Ovary (tissue), 10 donors: ENCODE measurements at regions of chr17 and their contacts with region 1.

Region 1: DNA sequence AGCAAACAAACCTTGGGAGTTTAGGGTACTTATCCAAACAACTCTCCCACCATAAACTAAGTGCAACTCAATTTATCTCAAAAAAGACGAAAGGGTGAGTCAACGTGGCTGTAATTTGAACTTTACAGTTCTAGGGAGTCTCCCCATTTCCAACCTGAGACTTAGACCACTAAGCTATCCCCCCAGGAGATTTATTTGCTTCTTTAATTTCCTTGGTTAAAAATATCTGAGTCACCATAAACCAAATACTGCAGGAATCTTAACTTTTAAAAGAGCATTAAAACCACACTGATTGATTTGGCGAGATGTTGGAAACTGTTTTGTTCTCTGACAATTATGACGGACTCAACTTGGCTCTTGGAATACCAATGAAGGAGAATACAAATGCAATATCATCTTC is 299.3 kb upstream of the SOX9 start:
- DNase-seq: no peak
- H3K4me3 ChIP-seq: no peak overlapping the region
- H3K27ac ChIP-seq: no peak overlapping the region
- H3K4me1 ChIP-seq: no peaks in the 10 kb centered on the region
- H3K27me3 ChIP-seq: no peaks in the 10 kb centered on the region
- CTCF ChIP-seq: no peak
- EP300 ChIP-seq: no peak
- POLR2A ChIP-seq: no peak

Region 2: GRCh38 chr17:71809537-71809936 is 12.0 kb before region 1 on chr17:
- intact Hi-C with region 1: loop called in 1 of 4 experiments (anchors 1 kb)
- DNase-seq: no peak
- H3K4me3 ChIP-seq: no peak overlapping the region
- H3K27ac ChIP-seq: no peak overlapping the region
- H3K4me1 ChIP-seq: no peaks in the 10 kb centered on the region
- H3K27me3 ChIP-seq: no peaks in the 10 kb centered on the region
- CTCF ChIP-seq: no peak
- EP300 ChIP-seq: no peak
- POLR2A ChIP-seq: no peak

Region 3: GRCh38 chr17:71849783-71850768 is 28.6 kb after region 1 on chr17:
- intact Hi-C with region 1: no loop called
- DNase-seq: no peak
- H3K4me3 ChIP-seq: no peak overlapping the region
- H3K27ac ChIP-seq: no peak overlapping the region
- H3K4me1 ChIP-seq: no peaks in the 10 kb centered on the region
- H3K27me3 ChIP-seq: no peaks in the 10 kb centered on the region
- CTCF ChIP-seq: no peak
- EP300 ChIP-seq: no peak
- POLR2A ChIP-seq: no peak